Ascending aorta (tissue), 2 donors: ENCODE measurements at regions of chr7 and their contacts with region 1.

Region 1: DNA sequence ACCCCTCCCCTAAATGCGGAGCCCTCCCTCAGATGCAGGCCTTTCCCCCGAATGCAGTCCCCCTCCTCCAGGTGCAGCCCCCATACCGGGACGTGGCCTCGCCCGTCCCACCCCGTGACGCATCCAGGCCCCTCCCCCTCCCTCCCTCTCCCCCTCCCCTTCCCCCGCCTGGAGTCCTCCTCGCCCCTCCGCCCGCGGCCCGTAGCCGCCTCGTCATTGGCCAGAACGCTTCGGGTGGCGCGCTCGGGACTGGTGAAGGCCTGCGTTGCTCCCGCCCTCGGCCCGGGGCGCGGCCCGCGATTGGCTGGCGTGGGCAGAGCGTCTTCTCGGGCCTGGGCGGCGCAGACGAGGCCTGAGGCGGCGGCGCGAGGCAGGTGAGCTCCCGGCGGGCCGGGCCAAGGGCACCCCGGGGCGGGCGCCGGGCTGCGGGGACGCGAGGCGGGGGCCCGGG is 16.0 kb upstream of the SUN1 start:
- DNase-seq: peak; percentile 95 to 99
- H3K4me3 ChIP-seq: peak overlapping the region; percentile 85 to 99
- H3K27ac ChIP-seq: peak overlapping the region; percentile 95 to 98
- H3K4me1 ChIP-seq: peaks cover 9 to 51% of the 10 kb centered on the region in 2 donors
- H3K27me3 ChIP-seq: no peaks in the 10 kb centered on the region
- CTCF ChIP-seq: no peak

Region 2: GRCh38 chr7:801940-802381 is 14.4 kb before region 1 on chr7:
- intact Hi-C with region 1: loop called (anchors 1 kb)
- DNase-seq: peak in 1 of 2 donors; percentile 81
- H3K4me3 ChIP-seq: peak overlapping the region; percentile 14 to 49
- H3K27ac ChIP-seq: peak overlapping the region; percentile 88 to 91
- H3K4me1 ChIP-seq: peaks cover 30 to 47% of the 10 kb centered on the region in 2 donors
- H3K27me3 ChIP-seq: no peaks in the 10 kb centered on the region
- CTCF ChIP-seq: no peak

Region 3: GRCh38 chr7:831596-832166 is 15.4 kb after region 1 on chr7:
- intact Hi-C with region 1: loop called (anchors 1 kb)
- DNase-seq: no peak
- H3K4me3 ChIP-seq: peak overlapping the region; percentile 18 to 51
- H3K27ac ChIP-seq: peak overlapping the region; percentile 89 to 93
- H3K4me1 ChIP-seq: peaks cover 20 to 54% of the 10 kb centered on the region in 2 donors
- H3K27me3 ChIP-seq: no peaks in the 10 kb centered on the region
- CTCF ChIP-seq: no peak

Region 4: DNA sequence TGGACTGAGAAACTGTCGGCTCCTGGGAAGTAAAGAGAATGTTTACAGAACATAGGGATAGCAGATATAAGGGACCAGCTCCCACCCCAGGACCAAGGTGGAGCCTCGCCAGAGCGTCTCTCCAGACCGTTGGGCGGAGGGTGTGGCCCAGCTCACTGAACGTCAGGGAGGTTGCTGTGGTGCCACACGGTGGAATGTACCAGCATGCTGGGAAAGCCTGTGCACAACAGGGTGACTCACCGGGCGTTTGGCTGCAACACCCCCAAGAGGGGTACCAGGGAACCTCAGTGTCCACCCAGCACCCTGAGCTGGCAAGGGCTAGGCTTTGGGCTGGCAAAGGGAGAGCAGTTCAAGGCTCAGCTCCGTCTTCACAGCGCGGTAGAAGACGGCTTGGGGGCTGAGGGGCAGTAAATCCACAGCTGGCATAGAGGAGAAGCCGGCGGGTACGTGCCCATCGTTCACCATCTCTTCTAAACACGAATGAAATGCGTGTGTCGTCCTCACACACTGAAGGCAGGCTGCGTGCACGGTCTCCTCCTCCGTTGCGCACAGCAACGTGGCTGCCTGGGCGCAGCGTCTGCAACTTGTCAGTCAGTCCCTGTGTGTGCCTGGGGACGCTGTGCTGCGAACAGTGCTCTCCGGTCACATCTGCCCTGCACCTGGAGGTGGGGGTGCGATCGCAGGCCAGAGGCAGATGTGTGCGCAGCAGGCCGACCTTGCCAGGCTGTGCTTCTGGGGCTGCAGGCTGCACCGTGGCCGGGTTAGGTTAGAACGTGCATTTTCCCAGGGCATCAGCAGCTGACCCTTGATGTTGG is 51.6 kb after region 1 on chr7:
- intact Hi-C with region 1: loop called (anchors 2 kb)
- DNase-seq: peak; percentile 63 to 94
- H3K4me3 ChIP-seq: peak overlapping the region; percentile 32 to 37
- H3K27ac ChIP-seq: peak overlapping the region; percentile 92 to 95
- H3K4me1 ChIP-seq: peaks cover 9 to 30% of the 10 kb centered on the region in 2 donors
- H3K27me3 ChIP-seq: no peaks in the 10 kb centered on the region
- CTCF ChIP-seq: peak in 2 of 3 experiments; percentile 18 to 21

Region 5: GRCh38 chr7:1466524-1467271 is 650.4 kb after region 1 on chr7:
- intact Hi-C with region 1: no loop called
- DNase-seq: peak; percentile 67 to 91
- H3K4me3 ChIP-seq: peak overlapping the region in 1 of 2 donors; percentile 1
- H3K27ac ChIP-seq: peak overlapping the region; percentile 84
- H3K4me1 ChIP-seq: peaks cover 6 to 29% of the 10 kb centered on the region in 2 donors
- H3K27me3 ChIP-seq: no peaks in the 10 kb centered on the region
- CTCF ChIP-seq: peak in 1 of 3 experiments; percentile 7

Region 6: GRCh38 chr7:1476859-1477258 is 660.5 kb after region 1 on chr7:
- intact Hi-C with region 1: no loop called
- DNase-seq: no peak
- H3K4me3 ChIP-seq: no peak overlapping the region
- H3K27ac ChIP-seq: no peak overlapping the region
- H3K4me1 ChIP-seq: no peaks in the 10 kb centered on the region
- H3K27me3 ChIP-seq: no peaks in the 10 kb centered on the region
- CTCF ChIP-seq: no peak